Activated naive CD4-positive, alpha-beta T cell treated with anti-CD3 and anti-CD28 coated beads for 36 hours (primary cell): ENCODE measurements at regions of chr3 and their contacts with region 1.

Region 1: GRCh38 chr3:113685956-113686754 is 10.3 kb downstream of the USF3 start:
- DNase-seq: no peak
- H3K4me3 Mint-ChIP-seq: no peak overlapping the region
- H3K27ac Mint-ChIP-seq: no peak overlapping the region
- H3K4me1 Mint-ChIP-seq: peaks cover 1% of the 10 kb centered on the region
- H3K27me3 Mint-ChIP-seq: no peaks in the 10 kb centered on the region

Region 2: GRCh38 chr3:113194823-113195401 is 491.2 kb before region 1 on chr3:
- CTCF ChIA-PET with region 1: no interaction called
- intact Hi-C with region 1: no loop called
- DNase-seq: no peak
- H3K4me3 Mint-ChIP-seq: no peak overlapping the region
- H3K27ac Mint-ChIP-seq: no peak overlapping the region
- H3K4me1 Mint-ChIP-seq: no peaks in the 10 kb centered on the region
- H3K27me3 Mint-ChIP-seq: no peaks in the 10 kb centered on the region

Region 3: GRCh38 chr3:113668015-113668414 is 18.1 kb before region 1 on chr3:
- CTCF ChIA-PET with region 1: no interaction called
- intact Hi-C with region 1: loop called (anchors 2 kb)
- DNase-seq: no peak
- H3K4me3 Mint-ChIP-seq: no peak overlapping the region
- H3K27ac Mint-ChIP-seq: peak overlapping the region; percentile 38
- H3K4me1 Mint-ChIP-seq: peaks cover 20% of the 10 kb centered on the region
- H3K27me3 Mint-ChIP-seq: no peaks in the 10 kb centered on the region